Motor neuron (in vitro differentiated cells): ENCODE measurements at regions of chr1 and their contacts with region 1.

Region 1: DNA sequence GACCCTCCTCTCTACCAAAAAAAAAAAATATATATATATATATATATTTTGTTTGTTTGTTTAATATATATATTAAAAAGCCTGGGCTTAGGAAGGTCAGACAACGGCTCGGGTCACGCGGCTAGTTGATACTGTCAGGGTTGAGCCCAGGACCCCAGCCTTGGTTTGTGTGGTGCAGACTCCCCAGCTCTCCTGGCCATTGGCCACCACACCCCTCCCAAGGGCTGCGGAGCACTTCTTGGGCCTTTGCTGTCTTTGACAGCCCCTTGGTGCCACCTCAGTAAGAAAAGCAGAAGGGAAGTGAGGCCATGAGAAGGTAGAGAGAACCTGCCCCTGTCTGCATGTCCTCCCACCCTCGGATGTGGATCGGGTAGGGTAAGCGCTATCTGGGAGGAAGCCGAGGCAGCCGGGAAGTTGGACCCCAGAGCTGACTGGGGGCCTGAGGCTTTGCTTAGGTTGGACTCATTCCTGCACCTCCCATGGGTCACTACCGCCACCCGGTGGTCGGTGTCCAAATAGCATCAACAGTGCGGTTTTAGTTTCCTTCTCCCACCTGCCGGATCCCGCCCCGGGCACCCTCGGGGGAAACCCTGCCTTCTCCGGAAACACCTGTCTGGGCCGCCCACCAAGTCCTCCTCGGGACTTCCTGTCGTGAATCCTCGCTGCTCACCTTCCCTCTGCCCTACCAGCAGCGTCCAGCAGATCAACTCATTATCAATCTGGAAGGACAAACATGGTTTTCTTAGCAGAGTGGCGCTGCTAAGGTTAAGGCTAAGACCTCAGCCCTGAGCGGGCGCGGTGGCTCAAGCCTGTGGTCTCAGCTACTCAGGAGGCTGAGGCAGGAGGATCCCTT is 29.8 kb upstream of the GNPAT start:
- ATAC-seq: peak; percentile 83 to 97 (median 88)
- H3K4me3 ChIP-seq: peak overlapping the region in 4 of 5 donors; percentile 6 to 29 (median 23)
- H3K27ac ChIP-seq: no peak overlapping the region
- H3K4me1 ChIP-seq: peaks cover 10 to 11% of the 10 kb centered on the region in 2 donors

Region 2: GRCh38 chr1:230797942-230798418 is 413.3 kb before region 1 on chr1:
- in situ Hi-C with region 1: loop called in 1 of 9 experiments (anchors 25 kb)
- ATAC-seq: peak; percentile 81 to 95 (median 87)
- H3K4me3 ChIP-seq: no peak overlapping the region
- H3K27ac ChIP-seq: no peak overlapping the region
- H3K4me1 ChIP-seq: peaks cover 17 to 18% of the 10 kb centered on the region in 2 donors

Region 3: DNA sequence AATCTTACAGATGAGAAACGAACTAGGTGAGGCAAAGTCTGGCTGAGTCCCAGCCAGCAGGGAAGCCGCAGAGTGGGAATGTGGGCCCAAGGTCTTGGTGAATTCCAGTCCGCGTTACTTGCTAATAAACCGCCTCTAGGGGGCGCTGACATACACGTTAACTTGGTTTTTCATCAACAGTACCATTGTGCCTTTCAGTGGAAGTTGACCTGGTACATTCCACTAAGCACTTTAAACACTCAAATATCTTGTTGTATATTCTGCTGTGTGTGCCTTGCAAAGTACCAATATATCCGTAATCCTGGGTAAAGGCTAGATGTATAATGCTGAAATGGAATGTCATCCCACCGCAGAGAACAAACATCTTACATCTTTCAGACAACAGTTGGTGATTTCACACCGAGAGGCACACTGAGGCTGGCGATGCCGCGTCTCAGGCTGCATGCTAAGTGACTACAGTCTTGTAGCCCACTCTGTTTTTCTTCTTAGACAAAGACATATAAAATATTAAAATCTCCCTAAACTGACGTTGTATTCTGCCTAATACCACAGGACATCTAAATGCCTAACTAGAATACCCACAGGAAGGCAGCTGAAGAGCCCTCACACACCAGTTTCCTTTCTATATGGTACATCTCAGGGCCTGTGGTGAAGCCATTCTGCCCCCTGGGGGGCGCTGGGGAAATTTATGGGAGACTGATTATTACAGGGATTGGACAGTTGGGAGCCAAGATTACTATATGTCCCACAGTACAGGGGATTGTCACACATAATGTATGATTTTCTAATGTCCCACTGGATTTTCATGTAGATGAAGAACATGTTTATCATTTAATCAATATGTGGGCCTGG is 293.7 kb before region 1 on chr1:
- in situ Hi-C with region 1: loop called in 3 of 9 experiments (anchors 10 to 25 kb)
- ATAC-seq: peak; percentile 64 to 83 (median 79)
- H3K4me3 ChIP-seq: no peak overlapping the region
- H3K27ac ChIP-seq: no peak overlapping the region
- H3K4me1 ChIP-seq: peaks cover 0 to 7% of the 10 kb centered on the region in 2 donors

Region 4: GRCh38 chr1:230940848-230941247 is 270.4 kb before region 1 on chr1:
- in situ Hi-C with region 1: loop called in 1 of 9 experiments (anchors 25 kb)
- ATAC-seq: no peak
- H3K4me3 ChIP-seq: no peak overlapping the region
- H3K27ac ChIP-seq: no peak overlapping the region
- H3K4me1 ChIP-seq: peaks cover 0 to 12% of the 10 kb centered on the region in 2 donors

Region 5: GRCh38 chr1:232344791-232345399 is 1133.7 kb after region 1 on chr1:
- in situ Hi-C with region 1: no loop called
- ATAC-seq: no peak
- H3K4me3 ChIP-seq: no peak overlapping the region
- H3K27ac ChIP-seq: no peak overlapping the region
- H3K4me1 ChIP-seq: peaks cover 4 to 12% of the 10 kb centered on the region in 2 donors